Activated CD4-positive, alpha-beta T cell treated with anti-CD3 and anti-CD28 coated beads for 36 hours (primary cell): ENCODE measurements at regions of chr5 and their contacts with region 1.

Region 1: GRCh38 chr5:130642461-130642860 is 522.6 kb downstream of the HINT1 start:
- DNase-seq: no peak
- ATAC-seq: no peak
- H3K4me3 Mint-ChIP-seq: no peak overlapping the region
- H3K27ac Mint-ChIP-seq: no peak overlapping the region
- H3K4me1 Mint-ChIP-seq: no peaks in the 10 kb centered on the region
- H3K27me3 Mint-ChIP-seq: peaks cover 4% of the 10 kb centered on the region

Region 2: GRCh38 chr5:130692770-130693169 is 50.3 kb after region 1 on chr5:
- CTCF ChIA-PET with region 1: no interaction called
- POLR2A ChIA-PET with region 1: no interaction called
- intact Hi-C with region 1: no loop called
- DNase-seq: no peak
- ATAC-seq: no peak
- H3K4me3 Mint-ChIP-seq: no peak overlapping the region
- H3K27ac Mint-ChIP-seq: no peak overlapping the region
- H3K4me1 Mint-ChIP-seq: no peaks in the 10 kb centered on the region
- H3K27me3 Mint-ChIP-seq: peaks cover 16% of the 10 kb centered on the region

Region 3: GRCh38 chr5:130795037-130795436 is 152.6 kb after region 1 on chr5:
- CTCF ChIA-PET with region 1: no interaction called
- POLR2A ChIA-PET with region 1: interaction called, 10 read pairs
- intact Hi-C with region 1: no loop called
- DNase-seq: no peak
- ATAC-seq: no peak
- H3K4me3 Mint-ChIP-seq: no peak overlapping the region
- H3K27ac Mint-ChIP-seq: no peak overlapping the region
- H3K4me1 Mint-ChIP-seq: no peaks in the 10 kb centered on the region
- H3K27me3 Mint-ChIP-seq: peaks cover 6% of the 10 kb centered on the region

Region 4: DNA sequence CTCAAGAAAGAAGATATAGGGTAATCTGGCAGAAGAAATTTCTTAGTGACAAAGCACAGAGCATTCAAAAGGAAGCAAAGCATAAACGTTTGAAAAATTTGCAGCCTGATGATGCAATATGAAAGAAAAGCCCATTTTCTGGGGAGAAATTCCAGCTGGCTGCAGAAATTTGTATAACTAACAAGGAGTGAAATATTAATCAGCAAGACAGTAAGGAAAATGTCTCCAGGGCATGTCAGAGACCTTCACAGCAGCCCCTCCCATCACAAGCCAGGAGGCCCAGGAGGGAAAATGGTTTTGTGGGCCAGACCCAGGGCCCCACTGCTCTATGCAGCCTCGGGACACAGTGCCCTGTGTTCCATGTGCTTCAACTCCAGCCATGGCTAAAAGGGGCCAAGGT is 163.2 kb after region 1 on chr5:
- CTCF ChIA-PET with region 1: no interaction called
- POLR2A ChIA-PET with region 1: no interaction called
- intact Hi-C with region 1: no loop called
- DNase-seq: no peak
- ATAC-seq: no peak
- H3K4me3 Mint-ChIP-seq: no peak overlapping the region
- H3K27ac Mint-ChIP-seq: no peak overlapping the region
- H3K4me1 Mint-ChIP-seq: no peaks in the 10 kb centered on the region
- H3K27me3 Mint-ChIP-seq: peaks cover 11% of the 10 kb centered on the region